ENCODE measurements at regions of chr11 and their contacts with region 1.

Region 1: DNA sequence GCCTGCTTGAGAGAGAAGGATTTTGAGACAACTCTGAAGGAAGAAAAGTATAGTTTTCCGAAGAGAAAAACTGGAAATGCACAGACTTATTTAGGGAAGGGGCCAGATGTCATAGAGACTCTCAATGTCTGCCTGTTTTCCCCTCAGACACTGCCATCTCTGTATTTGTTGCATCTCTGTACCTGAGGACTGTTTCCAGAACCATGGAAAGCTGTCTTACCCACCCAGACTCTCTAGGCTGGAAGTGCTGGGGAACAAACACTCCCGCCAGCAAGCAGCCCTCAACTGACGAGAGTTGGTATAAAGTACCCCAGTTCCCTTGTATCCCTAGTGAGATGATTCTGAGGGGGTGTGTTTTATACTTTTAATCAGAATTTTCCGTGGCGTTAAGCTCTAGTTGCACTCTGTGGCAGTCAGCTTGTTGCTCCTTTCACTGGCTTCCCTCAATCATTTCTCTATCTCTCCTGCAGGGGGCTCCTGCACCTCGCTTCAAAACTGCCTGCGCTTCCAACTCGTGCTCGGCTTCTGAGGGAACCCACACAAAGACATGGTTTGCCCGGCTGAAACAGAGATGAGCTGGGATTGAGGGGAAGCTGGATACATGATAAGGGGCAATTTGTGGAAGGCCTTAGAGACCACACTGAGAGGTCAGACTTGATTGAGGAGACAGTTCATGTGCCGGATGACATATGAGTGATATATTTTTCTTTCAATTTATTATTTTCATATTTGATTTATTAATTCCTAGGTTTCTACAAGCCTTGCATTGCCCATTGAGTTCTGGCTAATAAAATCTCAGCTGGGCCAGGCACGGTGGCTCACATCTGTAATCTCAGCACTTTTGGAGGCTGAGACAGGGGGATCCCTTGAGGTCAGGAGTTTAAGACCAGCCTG is 36.9 kb upstream of the CLPB start:
- DNase-seq: peak; percentile 55
- H3K4me3 Mint-ChIP-seq: peak overlapping the region; percentile 66
- H3K27ac Mint-ChIP-seq: no peak overlapping the region
- H3K4me1 Mint-ChIP-seq: peaks cover 7% of the 10 kb centered on the region
- H3K27me3 Mint-ChIP-seq: peaks cover 41% of the 10 kb centered on the region

Region 2: DNA sequence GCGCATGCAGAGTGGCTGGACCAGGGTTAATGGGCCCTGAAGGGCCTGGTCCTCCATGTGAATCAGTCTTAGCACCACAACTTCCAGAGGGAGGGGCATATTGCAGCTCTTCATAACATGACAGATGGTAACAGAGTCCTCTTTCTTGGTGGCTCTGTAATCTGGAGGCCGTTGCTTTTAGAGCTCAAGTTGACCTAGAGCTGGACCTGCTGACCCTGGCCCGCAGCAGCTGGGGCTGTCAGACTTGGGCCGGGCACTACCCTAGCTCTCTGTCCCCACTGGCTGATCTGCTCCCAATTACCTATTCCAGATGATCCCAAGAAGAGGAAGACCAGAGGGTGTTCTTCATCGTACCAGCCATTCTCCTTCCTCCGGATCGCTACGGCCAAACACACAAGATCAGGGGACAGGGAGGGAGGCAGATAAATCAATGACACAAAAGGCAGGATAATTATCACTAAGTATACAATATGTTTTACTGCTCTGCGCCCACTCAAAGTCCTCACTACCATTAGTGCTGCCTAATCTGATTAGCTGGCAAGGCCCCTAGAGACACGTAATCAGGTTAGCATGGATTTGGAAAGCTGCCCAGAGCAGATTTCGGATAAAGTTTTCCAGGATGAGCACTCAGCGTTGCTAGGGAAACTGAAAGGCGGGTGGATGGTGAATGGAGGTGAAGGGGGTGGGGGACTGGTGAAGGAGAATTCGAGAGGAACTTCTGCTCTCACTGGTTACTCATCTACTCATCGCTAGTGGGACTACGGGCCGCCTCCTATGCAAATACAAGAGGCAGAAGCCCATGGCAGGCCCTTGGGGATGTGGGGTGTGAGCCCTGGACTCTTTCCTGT is 162.8 kb before region 1 on chr11:
- intact Hi-C with region 1: no loop called
- DNase-seq: no peak
- H3K4me3 Mint-ChIP-seq: no peak overlapping the region
- H3K27ac Mint-ChIP-seq: no peak overlapping the region
- H3K4me1 Mint-ChIP-seq: no peaks in the 10 kb centered on the region
- H3K27me3 Mint-ChIP-seq: no peaks in the 10 kb centered on the region

Region 3: DNA sequence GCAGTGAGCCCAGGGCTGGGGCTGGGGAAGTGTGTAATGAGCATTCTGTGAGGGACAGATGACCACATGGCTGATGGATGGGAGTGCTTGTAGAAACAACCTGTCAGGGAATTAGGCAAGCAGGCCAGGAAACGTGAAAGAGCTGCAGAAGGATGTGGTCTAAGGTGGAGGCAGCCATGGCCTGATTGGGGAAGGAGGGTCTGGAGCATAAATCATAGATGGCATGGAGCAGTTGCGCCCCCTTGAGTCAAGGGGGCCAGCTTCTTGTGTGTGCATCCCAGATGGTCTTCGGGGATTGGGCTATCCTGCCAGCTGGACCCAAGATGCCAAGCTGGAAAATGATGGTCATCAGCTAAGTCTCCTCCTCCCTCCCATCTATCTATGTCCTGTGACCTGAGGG is 82.5 kb after region 1 on chr11:
- intact Hi-C with region 1: loop called (anchors 1 kb)
- DNase-seq: no peak
- H3K4me3 Mint-ChIP-seq: no peak overlapping the region
- H3K27ac Mint-ChIP-seq: no peak overlapping the region
- H3K4me1 Mint-ChIP-seq: no peaks in the 10 kb centered on the region
- H3K27me3 Mint-ChIP-seq: peaks cover 37% of the 10 kb centered on the region

Region 4: DNA sequence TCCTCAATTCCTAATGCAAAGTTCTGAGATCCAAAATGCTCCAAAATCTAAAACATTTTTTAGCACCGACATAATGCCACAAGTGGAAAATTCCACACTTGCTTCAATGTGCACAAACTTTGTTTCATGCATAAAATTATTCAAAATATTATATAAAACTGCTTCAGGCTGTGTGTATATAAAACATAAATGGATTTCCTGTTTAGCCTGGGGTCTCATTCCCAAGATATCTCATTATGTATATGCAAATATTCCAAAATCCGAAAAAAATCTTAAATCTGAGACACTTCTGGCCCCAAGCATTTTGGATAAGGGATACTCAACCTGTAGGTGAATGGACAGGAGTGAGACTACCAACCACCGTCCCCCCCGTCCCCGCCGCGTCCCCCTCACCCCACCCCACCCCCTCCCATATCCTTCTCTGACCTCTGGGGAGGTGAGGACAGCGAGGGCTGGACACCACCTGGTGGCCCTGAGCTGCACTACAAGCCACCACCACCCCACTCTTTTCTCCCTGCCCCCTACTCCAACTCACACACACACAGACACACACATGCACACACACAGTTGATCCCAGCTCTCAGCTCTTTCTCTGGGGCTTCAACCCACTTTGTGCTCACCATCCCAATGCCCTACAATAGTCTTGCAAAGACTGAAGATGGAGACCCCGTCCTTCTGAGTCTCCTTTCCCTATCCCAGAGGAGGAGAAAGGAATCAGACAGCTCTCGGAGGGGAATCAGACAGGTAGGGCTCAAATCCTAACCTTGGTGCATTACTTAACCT is 102.0 kb after region 1 on chr11:
- intact Hi-C with region 1: loop called (anchors 1 kb)
- DNase-seq: no peak
- H3K4me3 Mint-ChIP-seq: no peak overlapping the region
- H3K27ac Mint-ChIP-seq: no peak overlapping the region
- H3K4me1 Mint-ChIP-seq: peaks cover 19% of the 10 kb centered on the region
- H3K27me3 Mint-ChIP-seq: peaks cover 11% of the 10 kb centered on the region

Region 5: GRCh38 chr11:72642884-72643511 is 171.7 kb after region 1 on chr11:
- intact Hi-C with region 1: loop called (anchors 1 kb)
- DNase-seq: peak; percentile 60
- H3K4me3 Mint-ChIP-seq: peak overlapping the region; percentile 62
- H3K27ac Mint-ChIP-seq: no peak overlapping the region
- H3K4me1 Mint-ChIP-seq: no peaks in the 10 kb centered on the region
- H3K27me3 Mint-ChIP-seq: peaks cover 3% of the 10 kb centered on the region

Region 6: DNA sequence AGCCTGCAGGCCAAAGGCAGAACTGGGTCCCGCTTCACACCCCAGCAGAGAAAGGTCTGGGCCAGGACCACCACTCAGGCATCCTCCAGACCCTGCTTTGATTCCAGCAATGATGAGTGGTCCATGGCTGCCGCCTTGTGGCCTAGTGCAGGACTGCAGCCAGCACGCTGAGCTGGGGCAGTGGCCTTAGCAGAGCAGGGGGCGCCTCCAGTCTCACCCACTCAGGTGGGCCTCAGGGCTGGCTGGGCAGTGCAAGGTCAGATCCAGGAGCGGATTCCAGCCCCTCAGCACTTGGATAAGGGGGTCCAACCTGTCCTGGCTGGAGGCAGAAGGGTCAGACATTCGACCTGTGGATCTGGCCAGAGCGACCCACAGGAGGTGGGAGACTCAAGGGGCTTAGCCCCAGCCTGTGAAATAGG is 212.5 kb after region 1 on chr11:
- intact Hi-C with region 1: loop called (anchors 1 kb)
- DNase-seq: peak; percentile 49
- H3K4me3 Mint-ChIP-seq: no peak overlapping the region
- H3K27ac Mint-ChIP-seq: peak overlapping the region; percentile 50
- H3K4me1 Mint-ChIP-seq: peaks cover 43% of the 10 kb centered on the region
- H3K27me3 Mint-ChIP-seq: peaks cover 10% of the 10 kb centered on the region

Measured in activated T-helper 1 cell treated with anti-CD3 and anti-CD28 coated beads, Interleukin-12 subunit alpha, Interleukin-12 subunit beta, Interleukin-2, Interleukin-4 antibody, amounts not matched to agents 30 ng/mL and 10 ng/mL and 1 ng/mL, durations not matched to agents 14 hours and 24 hours and 36 hours (primary cell).